Ovary (tissue), 10 donors: ENCODE measurements at regions of chr7 and their contacts with region 1.

Region 1: DNA sequence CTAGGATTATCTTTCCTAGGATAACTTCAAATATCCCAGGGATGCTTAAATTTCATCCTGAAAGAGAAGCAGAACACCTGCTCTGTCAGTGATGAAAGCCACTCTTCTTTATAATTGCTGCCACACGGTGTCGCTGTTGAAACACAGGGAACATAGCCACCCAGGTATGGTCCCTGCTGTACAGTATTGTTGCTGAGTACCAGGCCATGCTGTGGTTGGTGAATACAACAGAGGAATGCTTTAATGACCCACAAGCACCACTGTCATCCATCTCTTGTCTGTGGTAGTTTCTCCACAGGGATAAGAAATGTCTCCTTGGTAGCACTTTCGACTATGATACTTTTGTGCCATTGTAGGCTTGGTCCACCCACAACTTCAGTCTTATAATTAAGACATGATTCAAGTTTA is 70.6 kb upstream of the STARD3NL start:
- DNase-seq: peak; percentile 23 to 67 (median 43)
- H3K4me3 ChIP-seq: no peak overlapping the region
- H3K27ac ChIP-seq: no peak overlapping the region
- H3K4me1 ChIP-seq: peaks cover 2% of the 10 kb centered on the region
- H3K27me3 ChIP-seq: no peaks in the 10 kb centered on the region
- CTCF ChIP-seq: peak; percentile 29 to 42 (median 42)
- EP300 ChIP-seq: no peak
- POLR2A ChIP-seq: no peak

Region 2: GRCh38 chr7:37916673-37917660 is 190.5 kb before region 1 on chr7 and contains the start of gene SFRP4:
- intact Hi-C with region 1: loop called in 2 of 4 experiments (anchors 5 to 10 kb)
- DNase-seq: peak; percentile 86 to 92 (median 90)
- H3K4me3 ChIP-seq: peak within 1 kb of the TSS; percentile 50
- H3K27ac ChIP-seq: peak within 1 kb of the TSS; percentile 90 to 96
- H3K4me1 ChIP-seq: peaks cover 13% of the 10 kb centered on the region
- H3K27me3 ChIP-seq: no peaks in the 10 kb centered on the region
- CTCF ChIP-seq: peak; percentile 65 to 85 (median 75)
- EP300 ChIP-seq: no peak
- POLR2A ChIP-seq: peak; percentile 63
- total RNA-seq, gene SFRP4: 42.3 to 121 (median 52.9) TPM

Region 3: DNA sequence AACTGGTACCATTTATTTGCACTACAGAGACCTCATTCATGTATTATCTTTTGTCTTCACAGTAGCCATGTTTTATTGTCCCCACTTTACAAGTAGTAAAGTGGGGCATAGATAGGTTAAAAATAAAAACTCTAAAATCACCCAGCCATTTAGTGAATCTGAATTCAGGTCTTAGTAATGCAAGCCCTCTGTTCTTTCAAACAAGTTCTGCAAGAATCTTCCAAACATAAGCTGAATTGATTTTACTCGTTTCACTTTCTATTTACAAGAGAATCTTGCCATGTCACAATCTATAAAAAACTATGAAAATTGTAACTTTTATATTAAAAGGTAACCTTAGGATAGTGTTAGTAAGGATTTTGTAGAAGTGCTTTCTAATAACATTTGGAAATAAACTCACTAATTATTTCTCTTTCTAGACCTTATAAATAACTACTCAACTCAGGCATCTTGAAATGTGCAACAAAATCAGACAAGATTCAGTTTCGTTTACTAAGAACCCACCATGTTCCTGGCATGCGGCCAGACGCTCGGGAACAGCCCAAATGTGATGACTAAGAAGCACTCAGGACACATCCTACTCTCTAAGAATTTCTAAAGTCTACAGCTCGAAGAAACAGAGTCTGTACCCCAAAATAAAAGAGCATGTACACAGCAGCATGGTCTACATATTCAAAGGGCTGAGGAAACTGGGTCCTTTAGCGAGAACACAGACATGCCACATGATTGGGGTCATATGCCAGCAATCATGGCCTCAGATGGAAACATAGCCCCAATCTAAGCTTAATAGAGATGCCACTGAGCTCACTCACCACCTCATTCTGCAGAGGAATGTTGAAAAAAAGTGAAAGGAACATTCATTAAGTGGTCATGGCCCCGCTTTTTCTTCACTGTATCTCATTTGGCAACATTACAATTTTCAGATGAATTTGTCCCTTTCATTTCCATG is 356.1 kb after region 1 on chr7:
- intact Hi-C with region 1: no loop called
- DNase-seq: peak in 1 of 5 donors; percentile 50
- H3K4me3 ChIP-seq: no peak overlapping the region
- H3K27ac ChIP-seq: no peak overlapping the region
- H3K4me1 ChIP-seq: no peaks in the 10 kb centered on the region
- H3K27me3 ChIP-seq: no peaks in the 10 kb centered on the region
- CTCF ChIP-seq: no peak
- EP300 ChIP-seq: no peak
- POLR2A ChIP-seq: no peak